PC-3 (cell line): ENCODE measurements at regions of chr5 and their contacts with region 1.

Region 1: DNA sequence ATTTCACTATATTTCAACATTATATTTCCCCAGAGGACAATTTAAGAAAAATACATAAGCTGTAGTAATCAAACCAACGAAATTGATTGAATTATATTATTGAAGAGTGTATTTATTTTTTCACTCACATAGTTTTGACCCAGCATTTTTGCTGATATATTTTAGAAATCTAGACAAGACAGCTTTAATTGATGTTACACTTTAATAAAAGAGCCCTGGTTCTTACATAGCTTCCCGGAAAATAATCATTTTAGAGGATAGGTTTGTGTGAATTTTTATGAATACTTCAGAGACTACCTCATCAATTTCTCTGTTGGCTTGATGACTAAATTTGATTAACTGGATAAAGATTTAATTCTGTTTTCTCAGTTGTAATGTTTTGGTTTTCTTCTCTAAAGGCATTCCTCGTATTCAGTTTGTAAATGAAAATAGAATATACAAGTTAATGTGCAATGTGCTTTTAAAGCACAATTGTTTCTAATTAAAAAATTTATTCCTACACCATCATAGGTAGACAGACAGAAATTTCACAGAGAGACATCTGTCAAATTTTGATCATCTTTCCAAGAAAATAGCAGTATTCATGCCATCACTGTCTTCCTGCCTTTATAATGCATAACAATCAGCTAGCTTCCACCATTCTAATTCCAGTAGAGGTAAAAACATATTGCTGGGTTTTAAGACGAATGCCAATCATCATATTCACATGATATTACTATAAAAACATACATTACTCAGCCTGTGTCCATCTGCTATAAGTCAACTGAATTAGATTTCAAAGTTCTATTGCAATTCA is 441.4 kb downstream of the CDH12 start:
- DNase-seq: no peak
- ATAC-seq: no peak
- H3K4me3 ChIP-seq: no peak overlapping the region
- H3K27ac ChIP-seq: no peak overlapping the region
- H3K4me1 ChIP-seq: no peaks in the 10 kb centered on the region
- H3K27me3 ChIP-seq: no peaks in the 10 kb centered on the region
- CTCF ChIP-seq: no peak

Region 2: DNA sequence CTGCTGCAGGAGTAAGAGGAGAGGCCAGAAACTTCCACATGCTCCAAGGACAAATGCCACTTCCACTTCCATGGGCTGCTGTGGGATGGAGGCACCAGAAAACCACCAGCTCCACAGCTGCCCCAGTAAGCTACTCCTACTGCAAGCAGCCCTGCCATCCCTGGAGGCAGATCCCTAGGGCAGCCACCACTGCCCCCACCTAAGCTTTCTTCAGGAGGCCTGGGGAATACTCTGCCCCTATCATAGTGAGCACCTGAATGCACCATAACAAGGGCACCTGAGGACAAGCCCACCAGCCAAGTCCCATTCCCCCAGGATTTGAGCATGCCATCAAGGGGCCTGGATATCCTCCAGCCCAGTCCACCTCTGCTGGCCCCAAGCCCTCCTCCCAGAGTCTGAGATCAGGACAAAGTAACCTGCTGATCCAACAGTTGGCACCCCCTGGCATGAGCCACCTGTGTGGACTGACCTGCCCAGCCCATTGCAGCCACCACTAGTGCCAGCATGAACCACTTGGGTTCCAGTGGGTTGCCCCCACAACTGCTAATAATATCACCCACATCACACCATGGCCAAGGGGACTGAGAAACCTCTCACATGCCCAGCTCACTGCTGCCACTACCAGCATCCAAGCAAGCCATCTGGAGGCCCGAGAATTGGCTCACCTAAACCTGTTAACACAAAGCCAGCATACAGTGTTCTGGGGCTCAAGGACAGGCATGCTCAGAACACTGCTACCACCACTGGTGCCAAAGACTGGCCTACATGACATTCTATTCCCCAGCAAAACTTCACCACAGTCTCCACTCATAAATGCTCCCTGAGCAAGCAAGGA is 38.7 kb before region 1 on chr5:
- CTCF ChIA-PET with region 1: no interaction called
- POLR2A ChIA-PET with region 1: no interaction called
- intact Hi-C with region 1: loop called (anchors 2 kb)
- DNase-seq: no peak
- ATAC-seq: no peak
- H3K4me3 ChIP-seq: no peak overlapping the region
- H3K27ac ChIP-seq: no peak overlapping the region
- H3K4me1 ChIP-seq: peaks cover 3% of the 10 kb centered on the region; the same call in 1 of the 2 replicates
- H3K27me3 ChIP-seq: no peaks in the 10 kb centered on the region
- CTCF ChIP-seq: no peak